HepG2 (cell line): ENCODE measurements at regions of chr5 and their contacts with region 1.

Region 1: DNA sequence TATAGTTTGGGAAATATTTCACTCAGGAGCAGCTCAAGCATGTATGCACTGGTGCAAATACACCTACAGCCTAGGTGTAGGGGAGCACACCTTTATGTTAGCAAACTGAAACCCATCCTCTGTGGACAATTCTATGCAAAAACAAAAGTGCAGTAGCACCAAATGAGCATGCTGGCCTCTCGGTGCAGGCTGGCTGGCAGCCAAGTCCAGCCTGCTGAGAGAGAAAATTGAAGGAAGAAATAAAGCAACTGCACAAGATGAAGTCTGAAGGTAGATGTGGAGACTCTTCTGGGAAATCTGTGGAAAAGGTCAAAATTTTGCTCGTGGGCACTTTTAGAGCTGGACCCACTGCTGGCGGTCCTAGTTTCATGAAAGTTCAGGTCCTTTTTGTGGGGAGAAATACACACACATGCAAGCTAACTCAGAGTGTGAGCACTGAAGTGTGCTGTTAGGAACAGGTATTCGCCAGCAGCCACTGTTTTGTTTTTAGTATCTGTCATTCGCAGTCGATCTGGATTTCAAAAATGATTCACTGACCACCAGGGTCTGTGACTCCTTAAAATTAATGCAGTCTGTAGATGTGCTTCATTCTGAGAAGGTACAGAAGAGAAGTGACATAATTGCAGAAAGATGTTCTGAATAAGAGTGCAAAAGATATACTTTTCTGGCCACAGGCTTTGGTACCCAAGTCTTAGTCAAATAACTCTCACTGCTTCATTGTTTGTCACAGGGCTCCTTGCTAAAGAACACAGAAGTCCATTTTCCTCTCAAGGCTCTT is 281.7 kb downstream of the PARP8 start:
- DNase-seq: no peak
- ATAC-seq: no peak
- H3K4me3 ChIP-seq: no peak overlapping the region
- H3K27ac ChIP-seq: no peak overlapping the region
- H3K4me1 ChIP-seq: no peaks in the 10 kb centered on the region
- H3K27me3 ChIP-seq: no peaks in the 10 kb centered on the region; a peak in 1 of 5 replicates
- CTCF ChIP-seq: no peak
- EP300 ChIP-seq: no peak
- POLR2A ChIP-seq: no peak
- RAD21 ChIP-seq: no peak

Region 2: DNA sequence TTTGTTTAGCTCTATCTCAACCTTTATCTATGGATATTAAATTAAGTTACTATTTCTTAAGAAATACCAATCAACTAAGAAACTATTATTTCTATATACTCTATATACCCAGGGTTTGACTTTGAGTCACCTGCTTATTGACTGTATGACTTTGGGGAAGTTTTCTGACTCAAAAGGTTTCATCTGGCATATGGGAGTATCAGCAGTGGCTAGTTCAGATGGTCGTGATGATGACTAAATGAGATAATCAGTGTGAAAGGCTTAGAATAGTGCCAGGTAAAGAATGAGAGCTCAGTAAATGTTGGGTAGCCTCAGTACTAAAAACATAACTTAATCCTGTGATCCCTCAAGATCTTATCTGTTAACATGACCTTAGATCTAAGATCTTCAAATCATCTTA is 255.5 kb after region 1 on chr5:
- CTCF ChIA-PET with region 1: no interaction called
- POLR2A ChIA-PET with region 1: no interaction called
- in situ Hi-C with region 1: no loop called
- intact Hi-C with region 1: loop called (anchors 10 kb)
- DNase-seq: no peak
- ATAC-seq: no peak
- H3K4me3 ChIP-seq: no peak overlapping the region
- H3K27ac ChIP-seq: no peak overlapping the region
- H3K4me1 ChIP-seq: peaks cover 9% of the 10 kb centered on the region
- H3K27me3 ChIP-seq: no peaks in the 10 kb centered on the region
- CTCF ChIP-seq: no peak
- EP300 ChIP-seq: no peak
- POLR2A ChIP-seq: no peak
- RAD21 ChIP-seq: no peak